GM10248 (cell line): ENCODE measurements at regions of chr19 and their contacts with region 1.

Region 1: DNA sequence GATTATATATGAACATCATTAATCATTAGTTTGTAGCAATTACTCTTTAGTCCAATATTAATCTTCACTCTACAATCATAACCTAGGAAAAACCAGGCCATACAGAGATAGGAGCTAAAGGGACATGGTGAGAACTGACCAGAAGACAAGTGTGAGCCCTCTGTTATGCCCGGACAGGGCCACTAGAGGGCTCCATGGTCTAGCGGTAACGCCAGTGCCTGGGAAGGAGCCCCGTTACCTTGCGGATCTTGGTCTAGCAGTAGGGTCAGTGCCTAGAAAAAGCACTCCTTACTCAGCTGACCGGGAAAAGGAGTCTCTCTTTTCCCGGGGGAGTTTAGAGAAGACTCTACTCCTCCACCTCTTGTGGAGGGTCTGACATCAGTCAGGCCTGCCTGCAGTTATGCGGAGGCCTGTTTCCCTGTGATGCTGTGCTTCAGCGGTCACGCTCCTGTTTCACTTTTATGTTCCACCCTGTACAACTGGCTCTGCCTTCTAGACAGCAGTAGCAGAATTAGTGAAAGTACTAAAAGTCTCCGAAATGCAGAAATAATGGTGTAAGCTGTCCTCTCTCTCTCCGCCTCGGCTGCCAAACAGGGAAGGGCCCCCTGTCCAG is 13.8 kb downstream of the OR7D4 start:
- DNase-seq: peak; percentile 47
- CTCF ChIP-seq: peak; percentile 97

Region 2: DNA sequence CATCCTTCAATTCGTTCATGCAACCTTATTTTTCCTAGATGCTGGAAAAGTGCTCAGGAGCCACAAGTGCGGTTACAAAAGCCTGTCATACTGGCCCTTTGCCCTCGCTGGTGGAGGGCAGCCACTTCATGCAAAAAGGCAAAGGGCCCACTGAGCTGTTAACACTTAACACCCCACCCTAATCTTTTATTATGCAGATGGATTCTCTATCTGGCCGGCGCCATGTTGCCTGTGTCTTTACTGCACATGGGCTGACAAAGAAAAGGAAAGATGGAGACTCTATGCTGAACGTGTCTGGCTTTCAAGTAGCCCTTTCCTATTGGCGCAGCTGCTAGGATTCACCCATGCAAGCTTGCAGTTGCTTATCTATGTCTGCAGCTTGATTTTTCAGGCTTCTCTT is 16.1 kb before region 1 on chr19:
- CTCF ChIA-PET with region 1: interaction called, 19 read pairs
- POLR2A ChIA-PET with region 1: no interaction called
- DNase-seq: no peak
- CTCF ChIP-seq: no peak

Region 3: GRCh38 chr19:9219489-9219888 is 13.9 kb after region 1 on chr19 and contains the start of gene OR7D4:
- CTCF ChIA-PET with region 1: interaction called, 15 read pairs
- POLR2A ChIA-PET with region 1: no interaction called
- DNase-seq: no peak
- CTCF ChIP-seq: no peak